H1 (cell line): ENCODE measurements at regions of chr16 and their contacts with region 1.

Region 1: GRCh38 chr16:10668322-10669045 is 26.2 kb downstream of the TEKT5 start:
- DNase-seq: peak in 1 of 2 experiments; percentile 57
- H3K4me3 ChIP-seq: no peak overlapping the region
- H3K27ac ChIP-seq: no peak overlapping the region
- H3K4me1 ChIP-seq: peaks cover 0 to 3% (median under 1%) of the 10 kb centered on the region in 4 experiments; a peak in 3 of 7 replicates
- H3K27me3 ChIP-seq: no peaks in the 10 kb centered on the region
- CTCF ChIP-seq: peak; percentile 57 to 80 (median 79)
- EP300 ChIP-seq: no peak
- POLR2A ChIP-seq: no peak
- RAD21 ChIP-seq: peak; percentile 54 to 57

Region 2: DNA sequence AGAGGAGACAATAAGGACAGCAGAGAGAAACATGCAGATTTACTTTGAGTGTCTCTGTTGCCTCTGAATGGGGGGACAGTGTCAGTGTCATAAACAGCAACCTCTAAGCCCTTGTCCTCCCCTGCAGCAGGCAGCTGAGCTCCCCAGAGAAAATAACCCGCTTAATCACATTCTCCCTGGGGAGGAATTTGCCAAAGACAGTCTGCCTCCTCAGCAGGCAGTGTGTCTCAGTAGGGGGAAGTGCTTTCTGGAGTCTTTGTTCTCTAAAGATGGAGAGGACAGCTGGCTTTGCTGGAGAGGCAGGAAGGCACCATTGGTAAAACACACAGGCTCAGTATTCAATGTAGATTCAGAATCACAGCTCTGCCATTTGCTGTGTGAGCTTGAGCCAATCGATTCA is 10.2 kb after region 1 on chr16:
- CTCF ChIA-PET with region 1: interaction called, 17 read pairs
- POLR2A ChIA-PET with region 1: interaction called, 3 read pairs
- DNase-seq: no peak
- H3K4me3 ChIP-seq: no peak overlapping the region
- H3K27ac ChIP-seq: no peak overlapping the region
- H3K4me1 ChIP-seq: peaks cover 0 to 6% (median 2%) of the 10 kb centered on the region in 4 experiments; a peak in 4 of 7 replicates
- H3K27me3 ChIP-seq: no peaks in the 10 kb centered on the region
- CTCF ChIP-seq: no peak
- EP300 ChIP-seq: no peak
- POLR2A ChIP-seq: no peak
- RAD21 ChIP-seq: no peak

Region 3: DNA sequence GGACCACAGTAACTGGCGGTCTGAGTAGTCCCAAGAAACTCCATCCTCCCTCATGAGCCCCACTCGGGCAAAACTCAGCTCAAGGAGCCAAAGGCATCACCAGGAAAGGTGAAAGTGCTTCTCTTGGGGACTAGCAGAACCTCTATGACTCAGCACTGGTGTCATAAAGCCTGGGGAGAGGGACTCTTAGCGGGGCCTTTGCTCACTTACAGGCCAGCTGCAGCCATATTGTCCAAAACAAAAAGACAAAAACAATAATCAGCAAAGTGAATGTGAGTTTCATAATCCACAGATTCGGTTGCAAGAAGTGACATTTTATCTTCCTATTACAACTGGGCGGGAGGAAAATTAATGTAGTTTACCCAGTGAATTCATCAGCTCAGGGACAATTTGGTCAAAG is 26.3 kb after region 1 on chr16 and contains the start of gene TEKT5:
- CTCF ChIA-PET with region 1: no interaction called
- POLR2A ChIA-PET with region 1: no interaction called
- DNase-seq: no peak
- H3K4me3 ChIP-seq: no peak within 1 kb of the TSS
- H3K27ac ChIP-seq: no peak within 1 kb of the TSS
- H3K4me1 ChIP-seq: no peaks in the 10 kb centered on the region; a peak in 2 of 7 replicates
- H3K27me3 ChIP-seq: no peaks in the 10 kb centered on the region
- CTCF ChIP-seq: no peak
- EP300 ChIP-seq: no peak
- POLR2A ChIP-seq: no peak
- RAD21 ChIP-seq: no peak
- total RNA-seq, gene TEKT5: not detected in 2 replicates